ENCODE measurements at regions of chr2 and their contacts with region 1.

Region 1: DNA sequence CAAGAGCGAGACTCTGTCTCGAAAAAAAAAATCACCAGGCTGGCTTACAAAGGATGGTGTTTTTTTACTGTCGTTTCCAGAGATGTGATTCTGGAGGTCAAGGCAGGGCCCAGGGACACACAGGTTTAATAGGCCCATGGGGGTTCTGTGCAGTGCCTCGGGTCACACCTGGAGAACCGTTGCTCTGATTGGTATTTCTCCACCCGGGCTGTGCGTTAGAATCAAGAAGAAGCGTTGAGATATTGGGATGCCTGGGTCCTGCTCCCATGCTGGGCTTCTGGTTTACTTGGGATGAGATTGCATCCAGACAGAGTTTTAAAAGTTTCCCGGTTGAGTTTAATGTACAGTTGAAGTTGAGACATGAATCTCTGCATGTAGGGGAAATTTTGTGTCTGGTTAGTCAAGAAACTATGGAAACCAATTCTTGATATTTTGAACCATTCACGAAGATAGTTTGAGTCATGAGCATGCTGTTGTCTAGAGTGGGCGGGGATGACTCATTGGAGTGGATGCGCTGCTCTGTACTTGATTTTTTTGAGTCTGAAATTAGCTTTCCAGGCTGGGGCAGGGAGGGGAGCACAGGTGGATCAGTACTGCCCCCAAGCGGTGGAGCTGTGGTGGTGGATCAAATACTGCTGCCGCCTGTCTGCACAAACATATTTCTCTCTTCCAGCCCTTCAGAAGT is 50.1 kb downstream of the GREB1 start:
- DNase-seq: peak; percentile 95
- H3K4me3 Mint-ChIP-seq: no peak overlapping the region
- H3K27ac Mint-ChIP-seq: no peak overlapping the region
- H3K4me1 Mint-ChIP-seq: peaks cover 11% of the 10 kb centered on the region
- H3K27me3 Mint-ChIP-seq: peaks cover 19% of the 10 kb centered on the region

Region 2: DNA sequence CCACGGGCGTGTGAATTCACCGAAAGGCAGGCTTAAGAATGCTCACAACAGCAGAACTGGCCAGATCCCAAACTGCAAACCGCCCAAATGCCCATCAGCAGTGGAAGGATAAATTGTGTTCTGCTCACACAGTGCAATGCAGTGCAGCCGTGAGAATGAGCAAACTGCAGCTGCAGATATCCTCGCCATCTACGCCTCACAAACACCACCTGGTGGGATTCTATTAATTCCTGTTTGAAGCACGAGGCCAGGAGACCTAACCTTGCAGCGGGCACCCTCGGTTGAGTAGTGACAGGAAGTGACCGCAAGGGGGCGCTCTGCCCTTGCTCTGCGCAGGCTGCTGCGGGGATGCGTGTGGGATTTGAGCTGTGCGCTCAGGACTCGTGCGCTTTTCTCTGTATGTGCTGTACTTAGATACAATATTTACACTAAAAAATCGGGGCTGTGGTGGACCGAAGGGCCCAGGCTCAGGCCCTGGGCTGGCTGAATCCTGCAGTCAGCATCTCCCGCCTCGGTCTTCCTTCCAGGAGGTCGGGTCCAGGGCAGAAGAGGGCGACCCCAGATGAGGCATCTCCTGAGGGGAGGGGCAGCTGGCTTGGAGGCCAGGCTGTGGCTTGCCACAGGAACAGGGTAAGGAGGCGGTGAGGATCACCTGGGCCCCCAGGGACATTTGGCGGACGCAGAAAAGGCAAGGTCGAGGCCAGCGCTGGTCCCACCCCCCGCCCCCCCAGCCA is 751.6 kb before region 1 on chr2:
- CTCF ChIA-PET with region 1: interaction called, 26 read pairs
- POLR2A ChIA-PET with region 1: no interaction called
- intact Hi-C with region 1: loop called (anchors 1 kb)
- DNase-seq: peak; percentile 89
- H3K4me3 Mint-ChIP-seq: no peak overlapping the region
- H3K27ac Mint-ChIP-seq: no peak overlapping the region
- H3K4me1 Mint-ChIP-seq: peaks cover 3% of the 10 kb centered on the region
- H3K27me3 Mint-ChIP-seq: peaks cover 12% of the 10 kb centered on the region

Region 3: DNA sequence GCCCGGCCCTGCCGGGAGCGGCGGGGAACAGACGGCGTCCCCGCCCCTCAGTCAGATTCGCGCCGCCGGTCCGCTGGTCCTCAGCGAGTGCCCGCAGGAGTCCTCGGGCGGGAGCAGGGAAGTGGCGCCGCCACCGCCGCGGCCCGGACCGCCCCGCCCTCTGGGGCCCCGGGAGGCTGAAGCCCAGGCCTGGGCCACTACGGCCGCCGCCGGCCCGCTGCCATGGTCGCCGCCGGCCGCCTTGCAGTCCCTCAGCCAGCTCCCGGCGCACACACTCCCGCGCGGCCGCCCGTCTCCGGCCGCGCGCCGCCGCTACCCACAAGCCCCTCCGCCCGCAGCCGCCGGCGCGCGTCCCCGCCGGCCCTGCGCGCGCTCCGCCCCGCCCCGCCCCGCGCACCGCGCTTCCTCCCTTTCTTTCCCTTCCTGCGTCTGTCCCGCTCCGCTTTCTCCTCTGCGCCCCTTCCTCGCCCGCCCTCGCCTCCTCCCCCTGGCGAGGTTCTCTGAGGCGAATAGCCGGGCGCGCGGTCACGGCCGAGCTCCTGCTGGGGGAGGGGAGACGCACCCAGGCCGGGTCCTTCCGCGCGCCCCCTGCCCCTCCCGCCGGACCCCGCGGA is 239.5 kb before region 1 on chr2 and contains the start of gene ROCK2:
- CTCF ChIA-PET with region 1: interaction called, 3 read pairs
- POLR2A ChIA-PET with region 1: no interaction called
- intact Hi-C with region 1: loop called (anchors 10 kb)
- DNase-seq: peak; percentile 80
- H3K4me3 Mint-ChIP-seq: peak within 1 kb of the TSS; percentile 98
- H3K27ac Mint-ChIP-seq: peak within 1 kb of the TSS; percentile 89
- H3K4me1 Mint-ChIP-seq: peaks cover 27% of the 10 kb centered on the region
- H3K27me3 Mint-ChIP-seq: no peaks in the 10 kb centered on the region
- total RNA-seq, gene ROCK2: 16.6 to 19.2 TPM

Region 4: DNA sequence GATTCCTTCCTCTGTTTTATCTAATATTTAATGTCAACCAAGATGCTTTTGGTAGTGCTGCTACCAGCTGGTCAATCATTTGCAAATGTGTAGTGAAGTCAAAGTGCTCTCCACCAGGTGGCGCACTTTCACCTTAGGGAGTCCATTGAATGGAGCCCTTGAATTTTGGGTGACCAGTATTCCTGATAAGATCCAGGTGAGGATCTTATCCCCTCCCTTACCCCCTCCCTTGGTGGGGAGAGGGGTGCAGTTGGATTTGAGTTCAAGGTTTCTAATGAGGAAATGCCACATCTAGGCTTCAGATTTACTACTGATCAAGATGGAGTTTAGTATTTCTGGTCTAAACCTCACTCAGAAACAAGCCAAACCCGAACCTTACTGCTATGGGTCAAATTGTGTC is 106.0 kb before region 1 on chr2:
- CTCF ChIA-PET with region 1: interaction called, 234 read pairs
- POLR2A ChIA-PET with region 1: no interaction called
- intact Hi-C with region 1: loop called (anchors 1 kb)
- DNase-seq: peak; percentile 86
- H3K4me3 Mint-ChIP-seq: no peak overlapping the region
- H3K27ac Mint-ChIP-seq: no peak overlapping the region
- H3K4me1 Mint-ChIP-seq: peaks cover under 1% of the 10 kb centered on the region
- H3K27me3 Mint-ChIP-seq: peaks cover 21% of the 10 kb centered on the region

Region 5: DNA sequence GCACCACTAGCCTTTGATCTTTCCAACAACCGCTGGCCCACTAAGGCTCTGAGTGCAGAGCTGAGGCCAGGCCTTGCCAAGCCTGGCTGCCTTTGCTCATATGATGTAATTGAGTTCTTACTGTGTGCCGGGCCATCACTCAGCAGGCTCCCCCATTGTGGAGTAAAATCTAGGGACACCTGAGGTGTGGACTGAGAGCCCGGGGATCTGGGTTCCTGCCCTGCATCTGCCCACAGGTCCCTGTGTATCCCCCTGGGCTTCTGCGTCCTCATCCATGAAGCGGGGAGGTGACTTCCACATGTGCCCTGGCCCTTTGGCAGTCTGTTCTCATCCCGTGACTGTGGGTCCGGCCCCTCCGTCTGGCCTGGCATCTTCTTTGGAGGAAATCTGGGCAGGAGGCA is 16.4 kb before region 1 on chr2:
- CTCF ChIA-PET with region 1: interaction called, 13 read pairs
- POLR2A ChIA-PET with region 1: no interaction called
- intact Hi-C with region 1: no loop called
- DNase-seq: no peak
- H3K4me3 Mint-ChIP-seq: no peak overlapping the region
- H3K27ac Mint-ChIP-seq: no peak overlapping the region
- H3K4me1 Mint-ChIP-seq: no peaks in the 10 kb centered on the region
- H3K27me3 Mint-ChIP-seq: peaks cover 5% of the 10 kb centered on the region

Region 6: DNA sequence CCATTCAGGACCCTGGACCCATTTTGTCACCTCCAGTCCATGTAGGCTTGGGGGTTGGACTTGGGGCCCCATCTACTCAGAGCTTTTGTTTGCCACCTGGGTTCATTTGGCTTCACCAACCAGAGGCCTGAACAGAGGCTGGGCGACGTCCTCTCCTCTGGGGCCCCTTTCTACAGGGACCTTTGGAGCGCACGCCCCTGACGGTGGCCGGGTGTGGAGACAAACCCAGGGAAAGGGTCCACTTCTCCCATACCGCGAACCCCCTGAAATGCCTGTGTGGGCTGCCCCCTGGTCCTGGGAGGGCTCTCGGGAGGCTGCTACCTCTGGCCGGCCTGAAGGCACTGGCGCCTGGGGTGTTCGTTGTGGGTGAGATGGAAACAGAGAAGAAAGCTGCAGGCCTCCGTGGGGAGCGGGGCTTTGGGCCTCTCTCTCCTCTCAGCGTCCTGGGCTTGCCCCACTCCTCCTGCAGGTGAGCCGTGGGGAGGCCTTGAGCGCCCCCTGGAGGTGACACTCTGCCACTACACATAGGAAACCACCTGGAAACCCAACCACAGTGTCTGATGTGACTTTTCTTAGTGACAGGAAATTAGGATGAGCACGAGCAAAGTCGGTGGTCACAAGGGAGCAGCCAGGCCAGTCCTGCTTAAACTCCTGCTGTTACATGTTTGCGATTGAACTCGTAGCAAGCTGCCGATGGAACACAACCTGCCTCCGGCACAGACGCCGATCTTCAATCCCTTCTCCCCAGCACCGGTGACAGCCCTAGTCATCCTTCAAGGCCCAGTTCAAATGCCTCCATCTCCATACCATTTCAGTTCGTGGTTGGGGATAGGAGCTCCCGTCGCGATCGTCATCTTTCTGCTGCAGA is 98.0 kb after region 1 on chr2:
- CTCF ChIA-PET with region 1: interaction called, 4 read pairs
- POLR2A ChIA-PET with region 1: no interaction called
- intact Hi-C with region 1: loop called (anchors 1 kb)
- DNase-seq: peak; percentile 77
- H3K4me3 Mint-ChIP-seq: no peak overlapping the region
- H3K27ac Mint-ChIP-seq: no peak overlapping the region
- H3K4me1 Mint-ChIP-seq: peaks cover 5% of the 10 kb centered on the region
- H3K27me3 Mint-ChIP-seq: peaks cover 26% of the 10 kb centered on the region

Measured in activated CD4-positive, alpha-beta memory T cell treated with anti-CD3 and anti-CD28 coated beads for 36 hours (primary cell).